RWPE1 (cell line): ENCODE measurements at regions of chr13 and their contacts with region 1.

Region 1: DNA sequence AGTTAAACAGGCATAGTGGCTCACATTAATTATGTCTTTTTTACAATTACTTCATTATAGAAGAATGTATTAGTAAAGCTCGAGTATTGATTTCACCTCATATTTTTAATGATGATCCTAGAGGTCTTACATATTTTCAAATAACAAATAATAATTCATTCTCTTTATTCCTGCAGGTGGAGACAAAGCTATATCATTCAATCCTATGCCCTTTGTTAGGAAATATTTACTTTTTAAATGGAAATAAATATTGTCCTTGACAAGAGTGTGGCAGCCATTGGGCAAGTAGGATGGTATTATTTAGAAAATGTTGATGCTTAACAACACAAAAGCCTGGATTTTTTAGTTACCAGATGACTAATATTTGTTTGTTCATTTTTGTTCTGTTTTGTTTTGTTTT is 127.6 kb downstream of the COG6 start:
- DNase-seq: no peak
- H3K27ac ChIP-seq: no peak overlapping the region
- CTCF ChIP-seq: peak; percentile 20

Region 2: DNA sequence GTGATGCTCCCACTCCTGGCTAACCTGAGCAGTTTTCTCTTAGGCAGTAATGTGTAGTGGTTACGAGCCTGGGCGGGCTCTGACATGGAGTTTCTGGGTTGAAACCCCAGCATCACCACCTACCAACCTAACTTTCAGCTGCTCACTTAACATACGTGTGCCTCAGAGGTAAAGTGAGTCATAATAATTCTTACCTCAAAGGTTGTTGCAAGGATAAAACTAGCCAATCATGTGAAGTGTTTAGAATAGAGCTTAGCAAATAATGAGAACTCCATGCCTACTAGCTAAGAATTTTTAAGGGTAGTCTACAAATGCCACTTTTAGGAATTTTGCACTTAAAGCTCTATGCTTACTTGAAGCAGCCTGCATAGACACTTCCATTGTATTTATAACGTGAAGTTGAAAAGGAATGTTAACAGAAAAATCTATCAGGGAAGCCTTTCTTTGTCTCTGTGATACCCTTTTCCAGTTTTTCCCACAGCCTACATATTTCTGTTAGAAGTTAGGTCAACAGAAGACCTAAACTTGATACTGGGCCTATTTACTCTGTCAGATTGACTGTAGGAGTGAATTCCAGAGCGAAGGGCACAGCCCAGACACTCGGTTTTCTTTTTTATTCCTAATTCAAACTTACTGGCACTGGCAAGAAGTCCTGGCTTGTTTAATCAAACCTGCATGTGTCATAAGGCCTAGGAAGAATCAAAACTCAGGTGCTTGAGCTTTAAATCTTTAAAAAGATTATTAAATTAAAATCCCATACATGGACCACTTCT is 1005.5 kb before region 1 on chr13:
- CTCF ChIA-PET with region 1: no interaction called
- POLR2A ChIA-PET with region 1: no interaction called
- DNase-seq: no peak
- H3K27ac ChIP-seq: no peak overlapping the region
- CTCF ChIP-seq: no peak

Region 3: DNA sequence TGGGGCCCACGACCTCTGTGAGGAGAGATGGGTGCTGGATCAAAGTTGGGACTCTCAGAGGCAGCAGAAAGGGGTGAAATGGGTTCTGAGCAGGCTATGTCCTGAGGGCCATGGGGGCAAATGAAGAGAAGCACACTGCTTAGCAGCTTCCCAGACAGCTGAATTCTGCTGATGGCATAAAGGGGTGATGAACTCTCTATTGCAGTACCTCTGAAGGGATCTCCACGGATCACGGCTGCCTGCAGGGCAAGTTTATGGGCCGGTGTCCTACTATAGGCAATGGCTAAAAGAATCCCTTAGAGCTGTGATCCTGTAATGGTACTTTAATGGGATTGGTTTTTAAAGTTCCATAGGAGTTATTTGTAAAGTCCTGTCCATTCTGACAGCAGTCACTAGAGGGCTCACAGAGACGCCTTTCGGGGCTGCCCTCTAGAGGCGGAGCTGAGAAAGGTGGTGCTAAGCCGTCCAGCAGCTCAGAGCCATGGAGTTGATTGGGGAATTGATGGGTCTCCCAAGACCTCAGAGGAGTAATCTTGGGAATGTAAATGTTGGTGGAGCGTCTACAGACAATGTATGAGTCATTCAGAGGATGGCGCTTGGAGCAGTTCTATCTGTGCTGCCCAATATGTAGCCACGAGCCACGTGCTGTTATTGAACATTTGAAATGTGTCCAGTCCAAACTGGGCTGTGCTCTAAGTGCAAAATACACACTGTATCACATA is 159.7 kb after region 1 on chr13:
- CTCF ChIA-PET with region 1: interaction called, 12 read pairs
- POLR2A ChIA-PET with region 1: no interaction called
- DNase-seq: peak; percentile 79
- H3K27ac ChIP-seq: peak overlapping the region; percentile 19
- CTCF ChIP-seq: peak; percentile 87